Left ventricle myocardium superior (tissue), 1 donor: ENCODE measurements at regions of chr3 and their contacts with region 1.

Region 1: GRCh38 chr3:66803206-66803605 is 194.9 kb upstream of the KBTBD8 start:
- DNase-seq: no peak
- ATAC-seq: no peak

Region 2: DNA sequence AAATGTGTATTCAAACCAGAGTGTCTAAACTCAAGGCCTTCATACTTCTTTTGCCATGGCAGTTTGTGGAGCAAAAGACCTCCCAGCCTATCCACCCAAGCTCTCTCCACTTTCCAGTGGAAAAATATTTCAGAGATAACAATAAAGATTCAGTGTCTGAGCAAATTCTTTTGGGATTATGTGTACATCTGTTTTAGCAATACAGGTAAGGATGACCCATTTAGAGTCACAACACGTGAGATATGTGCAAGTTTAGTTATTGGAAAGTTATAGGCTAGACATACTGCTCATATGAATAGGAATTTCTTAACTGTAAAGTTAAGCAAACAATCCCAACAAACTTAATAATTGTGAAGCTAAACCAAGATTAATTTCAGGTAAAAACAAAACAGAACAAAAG is 127.8 kb before region 1 on chr3:
- intact Hi-C with region 1: loop called (anchors 10 kb)
- DNase-seq: no peak
- ATAC-seq: no peak

Region 3: GRCh38 chr3:66938338-66938963 is 135.2 kb after region 1 on chr3:
- intact Hi-C with region 1: no loop called
- DNase-seq: no peak
- ATAC-seq: peak; percentile 70